Caco-2 (cell line): ENCODE measurements at regions of chr14 and their contacts with region 1.

Region 1: DNA sequence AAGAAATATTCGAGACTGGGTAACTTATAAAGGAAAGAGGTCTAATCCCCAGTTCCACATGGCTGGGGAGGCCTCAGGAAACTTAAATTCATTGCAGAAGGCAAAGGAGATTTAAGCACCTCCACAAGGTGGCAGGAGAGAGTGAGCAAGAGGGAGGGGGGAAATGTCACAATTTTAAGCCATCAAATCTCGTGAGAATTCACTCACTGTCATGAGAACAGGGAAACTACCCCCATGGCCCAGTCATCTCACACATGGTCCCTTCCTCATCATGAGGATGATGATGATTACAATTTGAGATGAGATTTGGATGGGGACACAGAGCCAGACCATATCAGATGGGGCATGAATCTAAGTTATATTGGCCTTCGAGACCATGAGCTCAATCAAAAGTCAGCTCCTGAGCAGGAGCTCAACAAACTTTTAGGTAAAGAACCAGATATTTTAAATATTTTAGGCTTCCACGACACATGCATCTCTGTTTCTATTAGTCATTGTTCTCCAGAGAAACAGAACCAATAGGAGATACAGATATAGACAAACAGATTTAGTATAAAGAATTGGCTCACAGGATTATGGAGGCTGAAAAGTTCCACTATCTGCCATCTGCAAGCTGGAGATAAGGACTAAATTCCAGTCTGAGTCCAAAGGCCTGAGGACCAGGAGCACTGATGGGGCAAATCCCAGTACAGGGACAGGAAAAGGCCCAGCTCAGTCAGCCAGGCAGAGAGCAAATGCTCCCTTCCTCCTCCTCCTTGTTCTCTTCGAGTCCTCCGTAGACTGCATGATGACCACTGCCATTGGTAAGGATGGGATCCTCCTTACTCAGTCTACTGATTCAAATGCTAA is 24.9 kb downstream of the DGLUCY start:
- DNase-seq: peak; percentile 61 to 68
- H3K4me3 ChIP-seq: no peak overlapping the region
- H3K4me3 Mint-ChIP-seq: no peak overlapping the region
- H3K27ac Mint-ChIP-seq: peak overlapping the region; percentile 6
- H3K4me1 ChIP-seq: peaks cover 36% of the 10 kb centered on the region
- H3K4me1 Mint-ChIP-seq: peaks cover 7% of the 10 kb centered on the region
- H3K27me3 ChIP-seq: no peaks in the 10 kb centered on the region
- H3K27me3 Mint-ChIP-seq: no peaks in the 10 kb centered on the region
- CTCF ChIP-seq: peak; percentile 37 to 58

Region 2: GRCh38 chr14:90903101-90903500 is 235.6 kb before region 1 on chr14:
- CTCF ChIA-PET with region 1: interaction called, 6 read pairs
- POLR2A ChIA-PET with region 1: no interaction called
- intact Hi-C with region 1: loop called (anchors 1 kb)
- DNase-seq: peak; percentile 55 to 64
- H3K4me3 ChIP-seq: no peak overlapping the region
- H3K4me3 Mint-ChIP-seq: no peak overlapping the region
- H3K27ac Mint-ChIP-seq: no peak overlapping the region
- H3K4me1 ChIP-seq: no peaks in the 10 kb centered on the region
- H3K4me1 Mint-ChIP-seq: no peaks in the 10 kb centered on the region
- H3K27me3 ChIP-seq: no peaks in the 10 kb centered on the region
- H3K27me3 Mint-ChIP-seq: no peaks in the 10 kb centered on the region
- CTCF ChIP-seq: peak; percentile 62 to 74

Region 3: GRCh38 chr14:91060351-91061055 is 78.2 kb before region 1 on chr14 and contains the start of gene RPS6KA5:
- CTCF ChIA-PET with region 1: interaction called, 6 read pairs
- POLR2A ChIA-PET with region 1: interaction called, 10 read pairs
- intact Hi-C with region 1: loop called (anchors 1 kb)
- DNase-seq: peak; percentile 99 to 100
- H3K4me3 ChIP-seq: peak within 1 kb of the TSS; percentile 90
- H3K4me3 Mint-ChIP-seq: no peak within 1 kb of the TSS
- H3K27ac Mint-ChIP-seq: no peak within 1 kb of the TSS
- H3K4me1 ChIP-seq: no peaks in the 10 kb centered on the region
- H3K4me1 Mint-ChIP-seq: no peaks in the 10 kb centered on the region
- H3K27me3 ChIP-seq: no peaks in the 10 kb centered on the region
- H3K27me3 Mint-ChIP-seq: no peaks in the 10 kb centered on the region
- CTCF ChIP-seq: no peak
- total RNA-seq, gene RPS6KA5: 5.7 and 6.0 TPM in 2 replicates

Region 4: DNA sequence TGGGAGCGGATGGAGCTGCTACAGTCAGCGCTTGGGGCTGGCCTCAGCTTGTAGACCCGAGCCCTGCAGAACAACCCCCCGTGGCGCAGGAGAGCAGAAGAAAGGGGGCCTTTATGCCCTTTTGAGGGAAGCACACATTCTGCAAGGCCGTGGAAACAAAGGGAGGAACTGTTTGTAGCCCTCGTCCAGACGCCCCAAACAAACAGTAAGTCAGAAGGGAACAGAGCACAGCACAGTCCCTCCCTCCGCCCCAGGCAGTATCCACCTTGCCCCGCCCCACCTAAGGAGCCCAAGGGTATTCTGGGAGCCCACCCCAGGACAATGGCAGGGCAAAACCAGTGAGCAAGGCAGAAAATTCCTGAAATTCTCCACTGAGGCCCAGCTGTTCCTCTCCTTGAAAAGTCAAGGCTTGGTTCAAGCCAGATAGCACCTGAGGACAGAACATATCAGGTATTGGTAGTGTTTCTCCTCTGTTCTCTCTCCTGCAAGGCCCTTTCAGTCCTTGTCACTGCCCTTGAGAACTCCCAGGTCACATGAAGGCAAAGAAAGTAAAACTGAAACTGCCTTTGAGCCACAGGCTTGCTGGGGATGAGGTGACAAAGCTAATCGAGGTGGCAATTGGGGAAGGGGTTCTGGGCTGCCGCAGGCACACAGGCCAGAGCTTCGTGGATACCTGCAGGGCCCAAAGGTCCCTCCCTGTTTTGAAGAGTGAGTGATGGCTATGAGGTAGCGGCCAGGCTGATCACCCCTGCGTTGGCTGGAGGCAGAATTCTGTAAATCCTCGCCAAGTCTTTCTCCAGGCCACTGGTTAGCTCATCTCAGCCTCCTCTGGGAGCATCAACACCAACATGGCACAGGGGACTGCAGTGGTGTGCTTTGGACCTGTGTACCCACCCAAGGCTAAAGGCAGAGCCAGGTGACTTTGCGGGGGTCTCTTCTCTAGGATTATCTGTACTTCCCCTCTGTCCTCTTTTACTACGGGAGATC is 24.4 kb before region 1 on chr14:
- CTCF ChIA-PET with region 1: interaction called, 13 read pairs
- POLR2A ChIA-PET with region 1: interaction called, 4 read pairs
- intact Hi-C with region 1: loop called (anchors 1 kb)
- DNase-seq: peak; percentile 87 to 89
- H3K4me3 ChIP-seq: peak overlapping the region; percentile 64
- H3K4me3 Mint-ChIP-seq: peak overlapping the region; percentile 84
- H3K27ac Mint-ChIP-seq: peak overlapping the region; percentile 84
- H3K4me1 ChIP-seq: peaks cover 9% of the 10 kb centered on the region
- H3K4me1 Mint-ChIP-seq: peaks cover 5% of the 10 kb centered on the region
- H3K27me3 ChIP-seq: no peaks in the 10 kb centered on the region
- H3K27me3 Mint-ChIP-seq: no peaks in the 10 kb centered on the region
- CTCF ChIP-seq: no peak

Region 5: GRCh38 chr14:91155626-91156089 is 16.9 kb after region 1 on chr14:
- CTCF ChIA-PET with region 1: interaction called, 4 read pairs
- POLR2A ChIA-PET with region 1: interaction called, 3 read pairs
- intact Hi-C with region 1: loop called (anchors 1 kb)
- DNase-seq: no peak
- H3K4me3 ChIP-seq: no peak overlapping the region
- H3K4me3 Mint-ChIP-seq: no peak overlapping the region
- H3K27ac Mint-ChIP-seq: peak overlapping the region; percentile 94
- H3K4me1 ChIP-seq: peaks cover 61% of the 10 kb centered on the region
- H3K4me1 Mint-ChIP-seq: peaks cover 44% of the 10 kb centered on the region
- H3K27me3 ChIP-seq: no peaks in the 10 kb centered on the region
- H3K27me3 Mint-ChIP-seq: no peaks in the 10 kb centered on the region
- CTCF ChIP-seq: no peak

Region 6: GRCh38 chr14:91220581-91221274 is 82.0 kb after region 1 on chr14:
- CTCF ChIA-PET with region 1: no interaction called
- POLR2A ChIA-PET with region 1: no interaction called
- intact Hi-C with region 1: no loop called
- DNase-seq: no peak
- H3K4me3 ChIP-seq: no peak overlapping the region
- H3K4me3 Mint-ChIP-seq: no peak overlapping the region
- H3K27ac Mint-ChIP-seq: no peak overlapping the region
- H3K4me1 ChIP-seq: no peaks in the 10 kb centered on the region
- H3K4me1 Mint-ChIP-seq: no peaks in the 10 kb centered on the region
- H3K27me3 ChIP-seq: no peaks in the 10 kb centered on the region
- H3K27me3 Mint-ChIP-seq: no peaks in the 10 kb centered on the region
- CTCF ChIP-seq: no peak

Region 7: GRCh38 chr14:91303091-91303923 is 164.6 kb after region 1 on chr14:
- CTCF ChIA-PET with region 1: no interaction called
- POLR2A ChIA-PET with region 1: no interaction called
- intact Hi-C with region 1: no loop called
- DNase-seq: peak; percentile 52 to 79
- H3K4me3 ChIP-seq: no peak overlapping the region
- H3K4me3 Mint-ChIP-seq: no peak overlapping the region
- H3K27ac Mint-ChIP-seq: no peak overlapping the region
- H3K4me1 ChIP-seq: no peaks in the 10 kb centered on the region
- H3K4me1 Mint-ChIP-seq: no peaks in the 10 kb centered on the region
- H3K27me3 ChIP-seq: no peaks in the 10 kb centered on the region
- H3K27me3 Mint-ChIP-seq: no peaks in the 10 kb centered on the region
- CTCF ChIP-seq: no peak